Endothelial cell of umbilical vein (primary cell): ENCODE measurements at regions of chr16 and their contacts with region 1.

Region 1: DNA sequence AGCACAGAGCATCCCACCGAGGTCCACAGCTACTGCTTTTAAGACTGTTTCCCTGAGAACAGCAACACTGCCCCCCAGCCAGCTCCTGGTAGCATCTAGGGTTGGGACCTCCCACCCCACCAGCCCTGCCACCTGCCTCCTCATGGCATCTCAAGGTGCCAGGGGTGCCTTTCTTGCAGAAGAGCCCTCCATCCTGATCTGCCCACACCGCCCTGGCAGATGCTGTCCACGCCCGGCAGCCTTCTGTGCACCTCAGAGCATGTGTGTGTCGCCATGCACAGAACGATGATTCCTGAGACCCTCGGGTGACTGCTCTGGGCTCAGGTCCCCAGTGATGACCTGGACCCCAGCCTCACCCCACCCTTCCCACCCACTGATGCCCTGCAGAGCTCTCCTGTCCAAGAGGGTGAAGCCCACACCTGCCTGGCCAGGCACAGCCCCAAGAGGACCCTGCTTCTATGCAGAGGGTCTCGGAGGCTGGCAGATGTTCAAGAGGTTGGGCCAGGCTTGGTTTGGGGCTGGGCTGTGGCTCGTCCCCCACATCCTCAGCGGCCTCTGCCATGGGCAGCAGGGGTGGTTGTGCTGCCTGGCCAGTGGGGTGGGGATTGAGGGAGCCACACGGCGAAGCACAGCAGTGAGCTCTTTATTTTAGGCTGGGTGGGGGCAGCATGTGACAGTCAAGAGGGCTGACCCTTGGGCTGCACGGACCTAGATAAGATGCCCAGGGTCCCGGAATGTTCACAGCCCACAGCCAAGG is 5.2 kb upstream of the SPATA2L start:
- DNase-seq: no peak
- H3K4me3 ChIP-seq: no peak overlapping the region
- H3K27ac ChIP-seq: no peak overlapping the region
- H3K4me1 ChIP-seq: no peaks in the 10 kb centered on the region
- H3K27me3 ChIP-seq: no peaks in the 10 kb centered on the region
- CTCF ChIP-seq: no peak
- POLR2A ChIP-seq: no peak

Region 2: GRCh38 chr16:89720813-89721545 is 14.3 kb after region 1 on chr16 and contains the starts of genes VPS9D1 and ZNF276:
- CTCF ChIA-PET with region 1: interaction called, 13 read pairs
- POLR2A ChIA-PET with region 1: interaction called, 3 read pairs
- dilution Hi-C with region 1: no loop called
- intact Hi-C with region 1: loop called (anchors 1 kb)
- DNase-seq: peak; percentile 79
- H3K4me3 ChIP-seq: peak within 1 kb of the TSS; percentile 57 to 76 (median 63)
- H3K27ac ChIP-seq: peak within 1 kb of the TSS; percentile 95
- H3K4me1 ChIP-seq: peaks cover 36% of the 10 kb centered on the region
- H3K27me3 ChIP-seq: no peaks in the 10 kb centered on the region
- CTCF ChIP-seq: no peak
- POLR2A ChIP-seq: peak; percentile 80
- total RNA-seq, gene VPS9D1: 15.5 and 18.3 TPM in 2 replicates
- total RNA-seq, gene ZNF276: 36.6 and 42.7 TPM in 2 replicates

Region 3: GRCh38 chr16:89741342-89742014 is 34.8 kb after region 1 on chr16:
- CTCF ChIA-PET with region 1: interaction called, 13 read pairs
- POLR2A ChIA-PET with region 1: no interaction called
- dilution Hi-C with region 1: no loop called
- intact Hi-C with region 1: no loop called
- DNase-seq: no peak
- H3K4me3 ChIP-seq: no peak overlapping the region
- H3K27ac ChIP-seq: no peak overlapping the region
- H3K4me1 ChIP-seq: no peaks in the 10 kb centered on the region
- H3K27me3 ChIP-seq: no peaks in the 10 kb centered on the region
- CTCF ChIP-seq: no peak
- POLR2A ChIP-seq: no peak

Region 4: DNA sequence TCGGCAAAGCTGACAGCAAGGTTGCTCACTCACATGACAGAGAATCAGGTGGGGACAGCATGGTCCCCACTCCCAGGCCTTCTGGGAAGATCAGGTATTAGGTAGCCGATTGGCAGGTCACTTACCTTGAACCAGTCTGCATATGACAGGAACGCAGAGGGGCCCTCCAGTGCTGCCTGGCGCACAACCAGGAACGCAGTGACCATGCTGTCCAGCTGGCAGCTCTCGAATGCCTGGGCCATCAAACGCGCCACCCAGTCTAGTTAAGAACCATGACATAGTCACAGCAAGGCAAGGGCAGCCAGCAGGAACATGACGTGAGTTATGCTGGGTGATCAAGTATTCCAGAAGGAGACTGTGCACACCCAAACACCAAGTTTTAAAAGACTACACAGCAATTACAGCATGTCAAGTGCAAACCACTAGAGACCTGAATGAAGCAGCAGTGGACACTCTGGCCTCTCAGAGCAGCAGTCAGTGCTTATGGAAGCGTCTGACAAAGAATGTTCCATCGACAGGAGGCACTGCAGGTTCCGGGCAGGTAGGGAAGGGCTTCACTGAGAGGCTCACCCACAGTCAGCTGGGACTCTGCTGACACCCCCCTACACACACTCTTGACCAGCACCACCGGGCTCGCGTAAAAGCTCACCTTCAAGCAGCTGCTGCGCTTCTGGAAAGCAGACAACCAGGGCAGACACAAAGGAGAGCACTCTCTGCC is 84.8 kb after region 1 on chr16:
- CTCF ChIA-PET with region 1: interaction called, 119 read pairs
- POLR2A ChIA-PET with region 1: no interaction called
- dilution Hi-C with region 1: no loop called
- intact Hi-C with region 1: loop called (anchors 1 kb)
- DNase-seq: no peak
- H3K4me3 ChIP-seq: no peak overlapping the region
- H3K27ac ChIP-seq: no peak overlapping the region
- H3K4me1 ChIP-seq: no peaks in the 10 kb centered on the region
- H3K27me3 ChIP-seq: no peaks in the 10 kb centered on the region
- CTCF ChIP-seq: no peak
- POLR2A ChIP-seq: no peak

Region 5: DNA sequence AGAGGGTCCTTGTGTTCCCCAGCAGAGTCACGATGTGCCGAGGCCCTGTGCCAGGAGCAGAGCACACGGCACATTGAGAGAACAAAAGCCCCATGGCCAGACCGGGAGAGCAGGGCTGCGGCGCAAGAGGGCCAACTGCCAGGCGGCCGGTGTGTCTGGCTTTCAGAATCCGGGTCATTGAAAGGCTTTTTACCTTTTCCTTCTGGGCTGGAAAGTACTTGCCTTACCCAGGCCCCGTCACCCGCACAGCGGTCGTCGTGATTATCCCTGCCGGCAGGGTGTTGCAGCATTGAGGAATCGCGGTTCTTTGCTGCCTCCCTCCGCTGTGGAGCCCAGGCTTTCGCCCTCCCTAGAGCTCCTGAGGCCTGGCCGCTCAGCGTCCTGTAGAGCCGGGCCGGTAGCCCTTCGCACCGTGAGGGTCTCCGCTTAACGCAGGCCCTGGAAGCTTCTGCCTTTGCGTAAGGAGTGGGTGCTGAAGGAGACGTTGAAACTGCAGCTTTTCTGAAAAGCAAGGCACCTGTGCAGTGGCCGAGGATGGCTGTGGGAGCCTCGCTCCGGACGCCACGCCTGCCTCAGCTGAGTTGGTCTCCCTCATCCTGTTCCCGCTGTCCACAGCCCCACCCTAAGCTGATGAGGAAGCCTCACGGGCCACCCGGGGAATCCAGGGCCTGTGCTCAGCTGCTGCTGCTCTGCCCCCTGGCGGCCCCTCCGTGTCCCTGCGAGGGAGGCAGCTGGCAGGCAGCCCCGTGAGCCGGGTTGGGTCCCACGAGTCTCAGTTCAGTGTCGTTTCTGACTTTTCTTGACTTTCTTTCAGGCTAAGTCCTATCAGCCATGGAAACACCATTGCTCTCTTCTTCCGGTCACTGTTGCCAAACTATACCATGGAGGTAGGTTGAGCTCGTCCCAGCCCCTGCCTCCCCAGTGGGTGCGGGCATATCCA is 203.4 kb after region 1 on chr16:
- CTCF ChIA-PET with region 1: interaction called, 31 read pairs
- POLR2A ChIA-PET with region 1: no interaction called
- dilution Hi-C with region 1: no loop called
- intact Hi-C with region 1: no loop called
- DNase-seq: peak; percentile 57
- H3K4me3 ChIP-seq: no peak overlapping the region
- H3K27ac ChIP-seq: no peak overlapping the region
- H3K4me1 ChIP-seq: peaks cover 3% of the 10 kb centered on the region
- H3K27me3 ChIP-seq: no peaks in the 10 kb centered on the region
- CTCF ChIP-seq: peak; percentile 98 to 99
- POLR2A ChIP-seq: no peak